ENCODE measurements at regions of chr1 and their contacts with region 1.

Region 1: DNA sequence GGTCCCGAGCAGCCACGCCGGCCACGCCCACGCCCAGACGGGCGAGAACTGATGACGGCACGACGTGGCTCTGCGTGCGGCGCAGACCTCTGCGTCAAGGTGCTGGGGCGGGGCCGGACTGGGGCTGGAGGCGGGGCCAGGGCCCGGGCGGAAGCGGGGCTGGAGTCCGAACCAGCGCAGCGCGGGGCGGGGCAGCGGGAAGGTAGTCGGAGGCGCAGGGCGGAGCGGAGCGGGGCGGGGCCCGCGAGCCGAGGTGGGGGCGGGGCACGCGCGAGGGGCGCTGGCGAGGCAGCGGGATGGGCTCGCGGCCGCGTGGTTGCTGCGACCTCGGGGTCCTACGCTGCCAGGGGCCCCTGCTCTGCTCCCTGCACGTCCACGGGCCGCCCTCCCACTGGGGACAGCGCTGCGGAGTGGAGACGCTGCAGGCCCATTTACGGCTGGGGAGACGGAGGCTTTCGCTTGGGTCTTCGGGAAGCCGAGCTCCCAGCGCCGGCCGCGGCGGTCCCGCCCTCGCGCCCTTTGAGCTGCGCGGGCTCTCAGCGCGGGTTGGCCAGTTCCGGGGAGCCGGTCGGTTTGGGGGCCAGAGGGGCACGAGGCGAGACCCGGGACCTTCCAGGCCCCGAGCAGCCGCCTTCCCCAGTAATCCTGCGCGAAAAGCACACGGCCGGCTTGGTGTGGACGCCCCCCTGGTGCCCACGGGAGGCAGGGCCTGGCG is at the start of gene PEX10:
- DNase-seq: peak; percentile 93
- H3K4me3 ChIP-seq: peak within 1 kb of the TSS; percentile 84
- H3K27ac ChIP-seq: peak within 1 kb of the TSS; percentile 69
- H3K27me3 ChIP-seq: no peaks in the 10 kb centered on the region
- CTCF ChIP-seq: no peak

Region 2: DNA sequence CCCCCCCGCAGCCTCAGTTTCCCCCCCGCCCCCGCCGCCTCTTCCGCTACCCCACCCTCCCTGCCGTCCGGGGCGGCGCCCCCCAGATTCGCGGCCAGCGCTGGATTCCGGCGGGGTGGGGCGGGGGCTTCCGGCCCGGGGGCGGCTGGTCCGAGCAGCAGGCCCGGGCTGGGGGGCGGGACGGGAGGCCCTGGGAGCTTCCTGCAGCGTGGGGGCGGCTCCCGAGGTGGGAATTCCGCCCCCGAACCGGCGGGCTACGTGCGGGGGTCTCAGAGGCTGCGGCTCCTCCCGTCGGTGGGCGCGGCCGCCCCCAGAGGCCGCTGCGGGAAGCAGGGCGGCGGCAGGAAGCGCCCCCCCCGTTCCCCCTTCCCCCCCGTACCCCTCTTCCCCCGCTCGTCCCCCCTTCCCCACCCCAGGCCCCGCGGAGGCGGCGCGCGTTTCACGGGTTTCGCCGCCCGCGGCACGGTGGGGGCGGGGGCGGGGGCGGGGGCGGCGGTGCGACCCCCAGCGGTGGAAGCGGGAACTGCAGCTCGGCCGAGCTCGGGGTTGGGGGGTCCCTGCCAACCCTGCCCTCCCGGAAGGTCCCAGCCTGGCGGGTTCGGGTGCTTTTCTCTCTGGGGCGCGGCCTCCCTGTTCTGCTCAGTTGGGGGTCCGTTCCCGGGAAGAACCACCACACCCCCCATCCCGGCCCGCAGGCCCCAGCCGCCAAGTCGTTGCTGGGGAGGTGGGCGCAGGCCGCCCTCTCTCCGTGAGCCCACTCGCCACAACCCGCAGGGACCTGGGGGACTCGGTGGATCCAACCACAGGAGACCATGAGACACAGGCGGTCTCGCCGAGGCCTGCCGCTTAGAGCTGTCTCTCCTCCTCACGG is 97.6 kb before region 1 on chr1:
- in situ Hi-C with region 1: no loop called
- DNase-seq: no peak
- H3K4me3 ChIP-seq: peak overlapping the region; percentile 38
- H3K27ac ChIP-seq: peak overlapping the region; percentile 49
- H3K27me3 ChIP-seq: no peaks in the 10 kb centered on the region
- CTCF ChIP-seq: peak; percentile 71

Region 3: GRCh38 chr1:2523191-2523890 is 110.7 kb after region 1 on chr1:
- in situ Hi-C with region 1: loop called (anchors 25 kb)
- DNase-seq: no peak
- H3K4me3 ChIP-seq: no peak overlapping the region
- H3K27ac ChIP-seq: no peak overlapping the region
- H3K27me3 ChIP-seq: no peaks in the 10 kb centered on the region
- CTCF ChIP-seq: peak; percentile 41